SK-N-SH (cell line): ENCODE measurements at regions of chr1 and their contacts with region 1.

Region 1: DNA sequence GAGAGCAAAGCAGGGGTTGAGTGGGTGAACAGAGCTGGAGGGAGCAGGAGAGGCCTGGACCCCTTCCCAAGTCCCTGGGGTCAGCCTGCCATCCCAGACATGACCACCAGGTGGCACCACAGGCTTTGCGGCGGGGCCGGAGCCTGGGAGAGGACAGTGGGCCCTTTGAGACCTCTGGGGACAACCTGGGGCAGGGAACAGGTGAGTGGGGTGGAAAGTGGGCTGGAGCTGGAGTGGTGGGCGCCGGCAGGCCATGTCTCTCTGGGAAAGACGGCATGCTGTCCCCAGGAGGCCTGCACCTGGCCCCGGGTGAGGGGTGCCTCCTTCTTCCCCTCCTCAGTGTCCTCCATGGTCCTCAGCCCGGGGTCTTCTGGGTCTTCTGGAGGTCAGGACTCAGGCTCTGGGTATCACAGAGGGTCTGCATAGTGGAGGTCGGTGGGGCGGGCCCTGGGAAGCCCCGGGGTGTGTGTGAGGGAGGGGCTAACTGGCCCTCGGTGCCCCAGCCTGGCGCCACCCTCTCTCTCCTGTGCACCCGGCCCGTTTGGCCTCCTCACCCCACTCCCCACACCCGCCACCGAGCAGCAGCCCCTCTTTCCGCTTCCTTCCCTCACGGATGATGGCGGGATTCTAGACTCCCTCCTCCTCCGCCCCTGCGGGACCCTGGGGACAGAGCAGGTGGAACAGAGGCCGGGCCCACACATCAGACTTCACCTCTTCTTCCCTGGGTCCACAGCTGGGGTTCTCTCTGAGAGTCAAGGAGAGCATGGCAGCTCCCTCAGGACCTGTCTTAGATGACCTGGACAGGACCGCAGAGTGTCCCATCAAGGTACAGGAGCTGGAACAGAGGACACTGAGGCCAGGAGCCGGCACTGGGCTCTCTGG is 28.4 kb upstream of the PKP1 start:
- DNase-seq: peak; percentile 97
- H3K4me3 ChIP-seq: no peak overlapping the region
- H3K27ac ChIP-seq: no peak overlapping the region
- H3K4me1 ChIP-seq: peaks cover 0 to 11% of the 10 kb centered on the region in 2 experiments; a peak in 1 of 4 replicates
- H3K27me3 ChIP-seq: no peaks in the 10 kb centered on the region
- CTCF ChIP-seq: peak; percentile 97
- EP300 ChIP-seq: no peak
- RAD21 ChIP-seq: peak; percentile 97

Region 2: DNA sequence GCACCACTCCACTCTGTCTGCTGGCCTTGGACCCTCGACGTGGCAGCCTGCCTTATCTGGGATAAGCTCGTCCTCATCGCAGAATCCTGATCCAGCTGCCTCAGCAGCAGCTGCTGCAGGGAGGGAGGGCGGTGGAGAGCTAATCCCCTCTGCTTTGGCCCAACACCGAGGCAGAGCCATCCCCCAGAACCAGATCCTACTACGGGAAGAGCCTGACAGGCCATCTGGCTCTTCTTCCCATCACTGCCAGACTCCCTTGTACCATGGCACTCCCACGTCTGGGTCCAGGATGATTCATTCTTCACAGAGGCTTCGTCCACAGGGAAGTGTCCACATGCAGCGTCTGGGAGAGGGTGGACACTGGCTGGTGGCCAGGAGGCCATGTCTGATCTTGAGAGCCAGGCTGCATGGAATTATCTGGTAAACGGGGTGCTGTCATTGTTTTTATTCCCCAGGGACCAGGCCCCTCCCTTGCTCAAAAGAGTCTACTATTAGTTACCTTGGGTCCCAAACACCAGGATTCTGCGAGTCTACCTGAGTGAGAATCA is 13.8 kb after region 1 on chr1:
- CTCF ChIA-PET with region 1: interaction called, 49 read pairs
- POLR2A ChIA-PET with region 1: interaction called, 3 read pairs
- DNase-seq: peak; percentile 89
- H3K4me3 ChIP-seq: no peak overlapping the region; a peak in 1 of 4 replicates
- H3K27ac ChIP-seq: peak overlapping the region; percentile 93 to 97
- H3K4me1 ChIP-seq: peaks cover 39 to 42% of the 10 kb centered on the region in 2 experiments
- H3K27me3 ChIP-seq: no peaks in the 10 kb centered on the region
- CTCF ChIP-seq: no peak
- EP300 ChIP-seq: peak in 1 of 2 experiments; percentile 86; a peak in 3 of 4 replicates
- RAD21 ChIP-seq: peak; percentile 25; the same call in 1 of the 2 replicates

Region 3: DNA sequence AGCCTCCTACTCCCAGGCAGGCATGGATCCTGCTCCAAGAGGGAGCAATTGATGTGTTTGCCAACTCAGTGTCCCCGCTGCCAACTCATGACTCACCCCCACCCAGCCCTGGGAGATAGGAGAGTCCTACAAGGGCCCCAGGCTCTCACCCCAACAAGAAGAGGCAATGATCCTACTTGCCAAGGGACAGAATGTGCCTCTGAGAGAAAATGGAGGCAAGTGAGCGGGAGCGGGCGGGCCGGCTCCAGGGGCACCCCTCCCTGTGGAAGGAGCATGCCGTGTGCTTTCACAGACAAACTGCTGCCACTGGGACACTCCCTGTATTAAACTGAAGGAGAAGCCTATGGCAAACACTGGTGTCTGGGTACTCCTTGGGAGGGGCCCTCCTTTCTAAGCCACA is 45.1 kb after region 1 on chr1:
- CTCF ChIA-PET with region 1: interaction called, 15 read pairs
- POLR2A ChIA-PET with region 1: no interaction called
- DNase-seq: no peak
- H3K4me3 ChIP-seq: no peak overlapping the region
- H3K27ac ChIP-seq: no peak overlapping the region; a peak in 1 of 4 replicates
- H3K4me1 ChIP-seq: peaks cover 3 to 54% of the 10 kb centered on the region in 2 experiments; a peak in 3 of 4 replicates
- H3K27me3 ChIP-seq: no peaks in the 10 kb centered on the region
- CTCF ChIP-seq: no peak
- EP300 ChIP-seq: no peak
- RAD21 ChIP-seq: no peak

Region 4: GRCh38 chr1:201320163-201320788 is 65.4 kb after region 1 on chr1:
- CTCF ChIA-PET with region 1: interaction called, 21 read pairs
- POLR2A ChIA-PET with region 1: no interaction called
- DNase-seq: peak; percentile 77
- H3K4me3 ChIP-seq: no peak overlapping the region
- H3K27ac ChIP-seq: peak overlapping the region in 1 of 2 experiments; percentile 47; a peak in 2 of 4 replicates
- H3K4me1 ChIP-seq: peaks cover 0 to 30% of the 10 kb centered on the region in 2 experiments; a peak in 1 of 4 replicates
- H3K27me3 ChIP-seq: peaks cover 7% of the 10 kb centered on the region; the same call in 1 of the 2 replicates
- CTCF ChIP-seq: no peak
- EP300 ChIP-seq: no peak
- RAD21 ChIP-seq: 0 out of 2 replicates have a peak, but pooled peaks have one; percentile 1

Region 5: GRCh38 chr1:201376464-201377374 is 121.9 kb after region 1 on chr1:
- CTCF ChIA-PET with region 1: interaction called, 21 read pairs
- POLR2A ChIA-PET with region 1: no interaction called
- DNase-seq: peak; percentile 58
- H3K4me3 ChIP-seq: no peak overlapping the region
- H3K27ac ChIP-seq: peak overlapping the region in 1 of 2 experiments; percentile 85; a peak in 2 of 4 replicates
- H3K4me1 ChIP-seq: peaks cover 0 to 32% of the 10 kb centered on the region in 2 experiments; a peak in 1 of 4 replicates
- H3K27me3 ChIP-seq: peaks cover 40% of the 10 kb centered on the region
- CTCF ChIP-seq: peak; percentile 33; the same call in 1 of the 2 replicates
- EP300 ChIP-seq: no peak
- RAD21 ChIP-seq: no peak

Region 6: GRCh38 chr1:201408176-201408833 is 153.4 kb after region 1 on chr1:
- CTCF ChIA-PET with region 1: interaction called, 16 read pairs
- POLR2A ChIA-PET with region 1: no interaction called
- DNase-seq: peak; percentile 91
- H3K4me3 ChIP-seq: no peak overlapping the region; a peak in 1 of 4 replicates
- H3K27ac ChIP-seq: no peak overlapping the region
- H3K4me1 ChIP-seq: peaks cover 0 to 8% of the 10 kb centered on the region in 2 experiments; a peak in 1 of 4 replicates
- H3K27me3 ChIP-seq: peaks cover 31% of the 10 kb centered on the region; the same call in 1 of the 2 replicates
- CTCF ChIP-seq: peak; percentile 95
- EP300 ChIP-seq: no peak
- RAD21 ChIP-seq: peak; percentile 78

Region 7: DNA sequence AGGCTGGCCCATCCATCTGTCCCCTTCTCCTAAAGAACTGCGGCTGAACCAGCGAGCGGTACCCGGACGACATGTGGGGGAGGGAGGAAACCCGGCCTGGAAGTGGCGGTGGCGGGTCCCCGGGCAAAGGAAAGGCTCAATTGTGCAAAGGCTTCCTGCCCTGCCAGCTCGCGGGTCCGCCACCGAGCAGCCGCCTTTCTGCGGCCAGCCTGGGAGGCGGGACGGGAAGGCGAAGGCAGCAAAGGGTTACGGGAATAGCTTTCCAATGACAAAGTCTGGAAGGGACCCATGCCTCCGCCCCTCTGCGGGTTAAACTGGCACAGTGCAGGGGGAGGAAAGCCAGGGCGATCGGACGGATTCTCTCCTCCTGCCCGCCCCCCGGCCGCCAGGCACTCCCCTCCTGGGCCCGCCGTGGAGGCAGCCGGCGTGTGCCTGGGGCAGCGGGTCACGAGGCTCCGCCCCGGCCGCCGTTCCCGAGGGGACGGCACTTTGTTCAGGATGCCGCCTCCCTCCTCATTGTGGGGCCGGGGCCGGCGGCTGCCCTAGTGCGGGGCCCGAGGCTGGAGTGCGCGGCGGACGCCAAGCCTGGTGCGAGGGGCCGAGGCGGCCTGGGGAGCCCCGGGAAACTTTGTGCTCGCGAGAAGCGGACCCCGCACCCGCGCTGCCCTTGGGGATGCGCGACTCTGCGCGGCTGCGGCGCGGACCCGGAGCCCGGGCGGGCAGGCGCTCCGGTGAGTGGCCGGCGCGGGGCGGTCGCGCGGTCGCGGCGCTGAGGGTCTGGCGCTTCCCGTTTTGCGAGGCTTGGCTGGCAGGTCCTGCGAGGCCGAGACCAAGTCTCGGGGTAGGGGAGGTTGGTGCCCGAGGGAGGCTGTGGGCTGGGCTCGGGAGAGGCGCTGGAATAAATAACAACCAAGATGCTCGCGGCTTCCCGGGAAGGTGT is 284.0 kb after region 1 on chr1 and contains the start of gene NAV1:
- CTCF ChIA-PET with region 1: no interaction called
- POLR2A ChIA-PET with region 1: no interaction called
- DNase-seq: peak; percentile 90
- H3K4me3 ChIP-seq: peak within 1 kb of the TSS; percentile 90 to 92
- H3K27ac ChIP-seq: peak within 1 kb of the TSS; percentile 84 to 94
- H3K4me1 ChIP-seq: peaks cover 38 to 46% of the 10 kb centered on the region in 2 experiments
- H3K27me3 ChIP-seq: no peaks in the 10 kb centered on the region
- CTCF ChIP-seq: no peak
- EP300 ChIP-seq: peak in 1 of 2 experiments; percentile 51; a peak in 1 of 4 replicates
- RAD21 ChIP-seq: no peak
- polyA plus RNA-seq, gene NAV1: 13.3 and 16.1 TPM in 2 replicates